ENCODE measurements at regions of chr6 and their contacts with region 1.

Region 1: DNA sequence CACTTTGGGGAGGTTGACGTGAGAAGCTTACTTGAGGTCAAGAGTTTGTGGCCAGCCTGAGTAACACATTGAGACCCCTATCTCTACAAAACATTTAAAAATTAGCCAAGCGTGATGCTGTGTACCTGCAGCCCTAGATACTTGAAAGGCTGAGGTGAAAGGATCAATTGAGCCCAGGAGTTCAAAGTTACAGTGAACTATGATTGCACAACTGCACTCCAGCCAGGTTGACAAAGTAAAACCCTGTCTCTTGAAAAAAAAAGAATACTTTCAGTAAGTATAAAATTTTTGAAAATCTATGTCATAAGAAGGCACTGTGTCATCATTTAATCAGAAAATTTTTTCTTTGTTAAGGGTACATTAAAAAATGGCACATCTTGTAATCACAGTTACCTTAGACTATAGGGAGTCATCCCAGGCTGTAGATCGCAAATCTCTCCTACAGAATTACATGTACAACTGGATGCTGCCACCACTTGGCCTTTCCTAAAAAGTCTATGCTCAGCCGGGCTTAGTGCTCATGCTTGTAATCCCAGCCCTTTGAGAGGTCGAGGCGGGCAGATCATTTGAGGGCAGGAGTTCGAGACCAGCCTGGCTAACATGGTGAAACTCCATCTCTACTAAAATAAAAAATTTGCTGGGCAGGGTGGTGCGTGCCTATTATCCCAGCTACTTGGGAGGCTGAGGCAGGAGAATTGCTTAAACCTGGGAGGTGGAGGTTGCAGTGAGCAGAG is 17.0 kb upstream of the MRS2 start:
- DNase-seq: no peak
- H3K4me3 ChIP-seq: no peak overlapping the region
- H3K27ac ChIP-seq: peak overlapping the region; percentile 41
- H3K4me1 ChIP-seq: peaks cover 34% of the 10 kb centered on the region
- H3K27me3 ChIP-seq: no peaks in the 10 kb centered on the region
- CTCF ChIP-seq: no peak

Region 2: DNA sequence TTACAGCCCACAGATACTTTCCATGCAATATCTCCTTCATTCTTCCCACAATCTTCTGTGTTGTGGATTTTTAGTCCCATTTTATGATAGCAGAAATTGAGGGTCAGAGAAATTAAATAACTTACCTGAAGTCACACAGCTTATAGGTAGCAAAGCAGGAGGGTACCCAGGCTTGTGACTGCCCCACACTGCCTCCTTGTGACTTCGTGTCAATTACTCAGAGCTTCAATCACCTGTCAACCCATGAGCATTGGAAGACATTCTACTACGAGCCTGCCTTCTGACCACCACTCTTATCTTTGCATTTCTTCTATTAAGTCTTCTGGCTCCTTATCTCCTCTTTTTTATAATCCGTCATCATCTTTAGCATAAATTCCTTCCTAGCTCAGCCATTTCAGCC is 331.3 kb before region 1 on chr6:
- CTCF ChIA-PET with region 1: no interaction called
- POLR2A ChIA-PET with region 1: interaction called, 16 read pairs
- intact Hi-C with region 1: no loop called
- DNase-seq: no peak
- H3K4me3 ChIP-seq: no peak overlapping the region
- H3K27ac ChIP-seq: no peak overlapping the region
- H3K4me1 ChIP-seq: no peaks in the 10 kb centered on the region
- H3K27me3 ChIP-seq: no peaks in the 10 kb centered on the region
- CTCF ChIP-seq: no peak

Region 3: GRCh38 chr6:24283043-24283985 is 102.4 kb before region 1 on chr6:
- CTCF ChIA-PET with region 1: interaction called, 21 read pairs
- POLR2A ChIA-PET with region 1: interaction called, 35 read pairs
- intact Hi-C with region 1: loop called (anchors 1 kb)
- DNase-seq: peak; percentile 97
- H3K4me3 ChIP-seq: peak overlapping the region; percentile 16
- H3K27ac ChIP-seq: peak overlapping the region; percentile 85
- H3K4me1 ChIP-seq: peaks cover 59% of the 10 kb centered on the region
- H3K27me3 ChIP-seq: no peaks in the 10 kb centered on the region
- CTCF ChIP-seq: peak; percentile 69

Region 4: GRCh38 chr6:24440897-24441598 is 55.3 kb after region 1 on chr6:
- CTCF ChIA-PET with region 1: no interaction called
- POLR2A ChIA-PET with region 1: interaction called, 19 read pairs
- intact Hi-C with region 1: no loop called
- DNase-seq: no peak
- H3K4me3 ChIP-seq: no peak overlapping the region
- H3K27ac ChIP-seq: no peak overlapping the region
- H3K4me1 ChIP-seq: no peaks in the 10 kb centered on the region
- H3K27me3 ChIP-seq: no peaks in the 10 kb centered on the region
- CTCF ChIP-seq: no peak

Region 5: DNA sequence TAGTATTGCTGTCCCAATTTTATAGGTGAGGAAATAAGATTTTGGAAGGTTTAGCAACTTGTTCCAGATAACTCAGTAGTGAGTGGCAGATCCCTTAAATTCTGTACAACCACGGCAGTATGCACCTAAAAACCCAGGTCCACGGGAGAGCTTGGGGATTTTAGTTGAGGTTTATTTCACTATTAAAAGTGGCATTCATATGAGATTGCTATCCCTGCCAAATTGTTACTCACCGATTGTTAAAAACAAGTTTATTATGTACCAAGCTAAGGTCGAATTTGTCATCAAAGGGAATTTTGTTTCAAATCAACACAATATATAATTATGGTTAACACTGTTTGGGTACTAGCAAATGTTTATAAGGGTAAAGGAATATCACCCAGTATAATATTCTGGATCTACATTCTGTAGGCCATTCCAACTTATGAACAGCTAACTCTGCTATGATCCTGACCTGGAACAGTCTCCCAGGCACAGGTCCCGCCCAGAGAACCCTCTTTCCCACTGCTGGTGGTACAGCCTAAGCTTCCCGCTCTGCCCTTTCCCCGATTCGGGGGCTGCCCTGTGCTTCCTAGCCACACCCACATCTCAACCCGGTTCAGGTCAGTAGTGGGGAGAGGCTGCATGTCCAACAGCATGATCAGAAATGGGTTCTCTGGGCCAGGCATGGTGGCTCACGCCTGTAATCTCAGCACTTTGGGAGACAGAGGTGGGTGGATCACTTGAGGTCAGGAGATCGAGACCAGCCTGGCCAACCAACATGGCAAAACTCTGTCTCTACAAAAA is 78.7 kb after region 1 on chr6:
- CTCF ChIA-PET with region 1: no interaction called
- POLR2A ChIA-PET with region 1: no interaction called
- intact Hi-C with region 1: no loop called
- DNase-seq: no peak
- H3K4me3 ChIP-seq: no peak overlapping the region
- H3K27ac ChIP-seq: no peak overlapping the region
- H3K4me1 ChIP-seq: no peaks in the 10 kb centered on the region
- H3K27me3 ChIP-seq: peaks cover 3% of the 10 kb centered on the region
- CTCF ChIP-seq: no peak

Region 6: GRCh38 chr6:24720604-24721460 is 335.1 kb after region 1 on chr6:
- CTCF ChIA-PET with region 1: no interaction called
- POLR2A ChIA-PET with region 1: interaction called, 13 read pairs
- intact Hi-C with region 1: no loop called
- DNase-seq: peak; percentile 100
- H3K4me3 ChIP-seq: peak overlapping the region; percentile 81
- H3K27ac ChIP-seq: peak overlapping the region; percentile 94
- H3K4me1 ChIP-seq: peaks cover 11% of the 10 kb centered on the region
- H3K27me3 ChIP-seq: no peaks in the 10 kb centered on the region
- CTCF ChIP-seq: no peak